WTC11 (cell line): ENCODE measurements at regions of chr12 and their contacts with region 1.

Region 1: DNA sequence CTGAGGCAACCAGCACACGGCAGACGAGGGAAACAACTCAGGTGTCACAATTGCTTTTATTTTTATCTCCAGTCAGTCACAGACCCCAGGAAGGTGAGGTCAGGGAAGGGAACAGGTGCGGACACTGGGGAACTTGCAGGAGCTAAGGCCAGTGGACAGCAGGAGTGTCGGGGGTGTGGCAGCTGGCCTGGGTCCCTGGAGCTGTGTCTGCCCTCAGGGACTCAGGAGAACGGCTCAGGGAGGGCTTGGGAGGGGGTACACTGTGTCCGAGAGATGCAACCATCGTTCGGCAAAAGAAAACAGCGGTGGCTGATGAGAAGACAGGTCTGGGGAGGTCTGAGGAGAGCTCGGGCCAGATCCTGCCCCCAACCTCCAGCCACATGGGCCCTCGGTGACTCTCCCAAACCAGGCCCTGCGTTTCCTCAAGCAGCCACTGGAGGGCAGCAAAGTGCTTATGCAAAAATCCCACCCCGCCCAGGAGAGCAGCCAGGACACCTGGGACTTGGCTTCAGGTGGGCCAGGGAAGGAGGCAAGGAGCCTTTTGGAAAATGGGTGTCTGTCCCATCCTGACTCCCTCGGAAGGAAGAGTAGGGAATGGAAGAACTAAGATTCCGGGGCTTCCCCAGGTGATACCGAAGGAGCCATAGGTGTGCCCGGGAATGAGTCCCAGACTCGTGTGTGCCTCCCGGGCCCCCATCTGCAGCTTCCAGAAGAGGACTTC is 24.1 kb upstream of the BCDIN3D start:
- DNase-seq: peak; percentile 90
- ATAC-seq: peak; percentile 94
- H3K4me3 Mint-ChIP-seq: no peak overlapping the region
- H3K27ac Mint-ChIP-seq: no peak overlapping the region
- H3K4me1 Mint-ChIP-seq: peaks cover 9% of the 10 kb centered on the region
- H3K27me3 Mint-ChIP-seq: peaks cover 10% of the 10 kb centered on the region
- CTCF ChIP-seq: peak; percentile 96

Region 2: DNA sequence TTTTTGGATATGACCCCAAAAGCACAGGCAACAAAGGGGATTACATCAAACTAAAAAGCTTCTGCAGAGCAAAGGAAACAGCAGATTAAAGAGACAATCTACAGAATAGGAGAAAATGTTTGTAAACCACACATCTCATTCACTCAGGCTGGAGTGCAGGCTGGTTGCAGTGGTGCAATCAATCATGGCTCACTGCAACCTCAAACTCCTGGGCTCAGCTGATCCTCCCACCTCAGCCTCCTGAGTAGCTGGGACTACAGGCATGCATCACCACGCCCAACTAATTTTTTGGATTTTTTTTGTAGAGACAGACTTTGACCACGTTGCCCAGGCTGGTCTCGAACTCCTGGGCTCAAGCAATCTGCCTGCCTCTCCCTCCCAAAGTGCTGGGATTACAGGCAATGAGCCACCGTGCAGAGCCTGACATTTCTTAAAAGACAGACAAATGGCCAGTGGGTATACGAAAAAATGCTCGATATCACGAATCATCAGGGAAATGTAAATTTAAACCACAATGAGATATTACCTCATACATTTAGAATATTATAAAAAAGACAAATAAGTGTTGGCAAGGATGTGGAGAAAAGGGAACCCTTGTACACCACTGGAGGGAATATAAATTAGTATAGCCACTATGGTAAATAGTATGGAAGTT is 48.7 kb before region 1 on chr12:
- CTCF ChIA-PET with region 1: no interaction called
- POLR2A ChIA-PET with region 1: no interaction called
- DNase-seq: no peak
- ATAC-seq: no peak
- H3K4me3 Mint-ChIP-seq: no peak overlapping the region
- H3K27ac Mint-ChIP-seq: no peak overlapping the region
- H3K4me1 Mint-ChIP-seq: peaks cover 17% of the 10 kb centered on the region
- H3K27me3 Mint-ChIP-seq: no peaks in the 10 kb centered on the region
- CTCF ChIP-seq: no peak

Region 3: DNA sequence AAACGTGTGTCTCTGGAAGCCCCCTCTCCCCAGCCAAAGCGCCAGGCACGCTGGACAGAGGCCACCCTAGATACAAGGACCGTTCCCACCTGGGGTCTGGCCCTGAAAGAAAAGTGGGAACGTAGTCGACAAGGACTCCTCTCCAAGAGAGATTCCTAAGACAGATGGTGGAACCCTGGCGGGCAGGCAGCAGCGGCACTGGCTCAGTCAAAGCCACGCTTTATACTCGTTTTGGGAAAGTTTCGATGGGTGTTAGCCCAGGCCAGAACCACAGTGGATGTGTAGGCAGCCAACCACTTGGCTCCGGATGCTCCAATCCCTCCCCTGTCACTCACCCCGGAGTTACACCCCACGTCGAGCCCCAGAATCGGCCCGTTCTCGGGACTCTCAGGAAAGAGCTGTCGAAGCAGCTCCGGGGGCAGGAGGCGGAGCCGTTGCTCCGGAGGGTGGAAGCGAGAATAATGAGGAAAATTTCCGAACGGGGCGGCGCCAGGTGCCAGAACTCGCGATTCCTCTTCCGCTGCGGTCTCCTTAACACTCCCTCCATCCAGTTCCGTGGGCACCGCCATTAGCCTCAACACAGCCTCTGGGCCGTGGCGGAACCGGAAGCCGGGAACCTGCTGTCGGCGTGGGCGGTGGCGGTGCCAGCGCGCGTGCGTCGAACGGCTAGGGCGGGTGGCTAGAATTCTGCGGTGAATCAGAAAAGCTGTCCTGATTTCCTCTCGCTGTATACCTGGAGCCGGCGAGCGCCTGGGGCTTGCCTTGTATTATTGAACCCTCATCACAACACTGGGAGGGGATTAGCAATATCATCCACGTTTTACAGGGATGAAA is 24.3 kb before region 1 on chr12 and contains the start of gene BCDIN3D:
- CTCF ChIA-PET with region 1: interaction called, 12 read pairs
- POLR2A ChIA-PET with region 1: interaction called, 4 read pairs
- DNase-seq: peak; percentile 79
- ATAC-seq: peak; percentile 82
- H3K4me3 Mint-ChIP-seq: peak within 1 kb of the TSS; percentile 92
- H3K27ac Mint-ChIP-seq: peak within 1 kb of the TSS; percentile 98
- H3K4me1 Mint-ChIP-seq: peaks cover 13% of the 10 kb centered on the region
- H3K27me3 Mint-ChIP-seq: peaks cover 23% of the 10 kb centered on the region
- CTCF ChIP-seq: no peak
- total RNA-seq, gene BCDIN3D: 1.6 to 3.2 TPM (median 2.4 TPM) in 3 replicates

Region 4: DNA sequence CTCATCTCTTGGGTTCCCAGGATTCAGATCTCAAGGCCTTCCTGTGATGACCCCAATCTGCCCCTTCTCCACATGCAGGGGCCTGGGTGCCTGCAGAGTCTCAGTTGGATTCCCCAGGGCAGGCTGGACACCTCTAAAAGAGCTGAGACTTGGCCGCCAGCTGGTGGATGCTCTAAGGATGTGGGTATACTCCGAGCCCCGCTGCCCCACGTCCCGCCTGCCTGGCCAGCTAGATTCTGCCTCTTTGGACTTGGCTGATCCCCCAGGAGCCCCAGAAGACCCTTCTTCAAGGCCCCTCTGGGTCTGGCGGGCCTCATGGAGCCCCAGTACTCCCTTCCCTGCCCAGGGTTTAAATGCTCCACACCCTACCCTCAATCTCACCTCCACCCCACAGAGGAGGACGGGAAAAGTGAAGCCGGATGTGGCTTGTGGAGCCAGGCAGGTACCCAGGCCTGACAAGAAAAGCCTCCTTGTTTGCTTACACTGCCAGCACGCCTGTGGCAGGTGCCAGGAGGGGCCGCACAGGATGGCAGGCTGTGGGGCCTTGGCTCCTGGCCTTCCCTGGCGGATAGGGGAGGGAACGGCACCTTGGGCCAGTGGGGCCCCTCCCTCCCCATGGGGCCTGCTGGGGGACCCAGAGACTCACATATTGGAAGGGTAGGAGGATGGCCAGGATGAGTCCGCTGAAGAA is 21.6 kb after region 1 on chr12:
- CTCF ChIA-PET with region 1: interaction called, 11 read pairs
- POLR2A ChIA-PET with region 1: no interaction called
- DNase-seq: no peak
- ATAC-seq: no peak
- H3K4me3 Mint-ChIP-seq: no peak overlapping the region
- H3K27ac Mint-ChIP-seq: no peak overlapping the region
- H3K4me1 Mint-ChIP-seq: peaks cover 30% of the 10 kb centered on the region
- H3K27me3 Mint-ChIP-seq: no peaks in the 10 kb centered on the region; the same call in 1 of the 2 replicates
- CTCF ChIP-seq: no peak

Region 5: GRCh38 chr12:49909826-49910225 is 42.8 kb after region 1 on chr12:
- CTCF ChIA-PET with region 1: interaction called, 12 read pairs
- POLR2A ChIA-PET with region 1: interaction called, 4 read pairs
- DNase-seq: peak; percentile 54
- ATAC-seq: peak; percentile 78
- H3K4me3 Mint-ChIP-seq: no peak overlapping the region
- H3K27ac Mint-ChIP-seq: no peak overlapping the region
- H3K4me1 Mint-ChIP-seq: peaks cover 35% of the 10 kb centered on the region
- H3K27me3 Mint-ChIP-seq: peaks cover 22% of the 10 kb centered on the region
- CTCF ChIP-seq: no peak

Region 6: DNA sequence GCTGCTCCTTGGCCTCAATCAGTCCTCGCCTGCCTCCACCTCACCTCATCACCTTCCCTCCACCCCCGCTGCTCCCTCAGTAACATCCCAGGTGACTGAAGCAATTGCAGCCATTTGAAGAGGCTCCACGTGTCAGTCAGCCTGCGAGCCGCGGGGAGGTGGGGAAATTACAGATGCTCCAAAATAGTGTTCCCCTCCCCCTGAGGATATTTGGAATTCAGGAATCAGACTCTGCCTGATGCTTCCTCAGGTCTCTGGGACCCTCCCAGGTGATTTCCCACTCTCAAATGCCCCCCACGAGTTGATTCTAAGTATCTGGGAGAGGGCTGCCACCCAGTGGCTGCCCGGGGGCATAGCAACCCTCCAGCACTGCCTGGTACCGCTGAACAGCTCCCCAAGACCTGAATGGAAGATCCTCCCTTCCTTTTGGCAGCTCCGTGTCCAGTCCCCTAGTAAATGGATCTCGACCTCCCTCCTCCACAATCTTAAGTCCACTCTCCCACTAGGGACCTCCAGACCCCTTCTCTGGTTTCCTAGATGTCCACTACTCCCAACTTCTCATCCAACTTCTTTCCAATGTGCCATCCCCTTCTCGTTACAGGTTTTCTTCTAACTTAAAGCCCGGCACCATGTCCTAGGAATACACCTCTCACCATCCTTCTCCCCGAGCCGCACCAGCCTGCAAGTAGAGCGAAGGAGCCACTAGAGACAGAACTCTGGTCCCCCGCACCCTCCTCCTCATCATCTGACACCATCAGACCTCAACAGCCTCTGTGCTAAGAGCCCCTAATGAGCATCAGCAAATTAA is 189.0 kb after region 1 on chr12:
- CTCF ChIA-PET with region 1: interaction called, 12 read pairs
- POLR2A ChIA-PET with region 1: no interaction called
- DNase-seq: peak; percentile 72
- ATAC-seq: peak; percentile 46
- H3K4me3 Mint-ChIP-seq: peak overlapping the region; percentile 79
- H3K27ac Mint-ChIP-seq: no peak overlapping the region
- H3K4me1 Mint-ChIP-seq: peaks cover 25% of the 10 kb centered on the region
- H3K27me3 Mint-ChIP-seq: peaks cover 95% of the 10 kb centered on the region
- CTCF ChIP-seq: peak; percentile 94